ENCODE measurements at regions of chr12 and their contacts with region 1.

Region 1: DNA sequence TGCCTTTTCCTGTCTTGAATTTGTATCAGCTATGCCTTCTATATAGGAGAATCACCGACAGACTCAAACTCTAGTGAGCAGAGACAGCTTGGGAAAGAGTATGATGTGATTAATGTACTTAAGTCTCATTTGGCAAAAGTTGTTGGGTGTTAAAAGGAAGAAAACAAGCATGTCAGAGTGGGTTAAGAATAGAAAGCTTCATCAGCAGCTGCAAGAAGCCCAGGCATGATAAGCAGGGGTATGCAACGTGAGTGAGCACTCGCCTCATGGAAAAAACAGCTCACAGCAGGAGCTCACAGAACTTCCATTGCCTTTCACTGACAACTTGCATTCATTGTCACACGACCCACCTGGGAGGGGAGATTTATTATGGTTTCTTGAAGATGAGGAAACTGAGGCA is 35.9 kb upstream of the WNK1 start:
- DNase-seq: peak in 1 of 3 donors; percentile 49
- ATAC-seq: peak; percentile 60 to 82
- H3K4me3 ChIP-seq: no peak overlapping the region
- H3K27ac ChIP-seq: peak overlapping the region; percentile 62
- H3K4me1 ChIP-seq: peaks cover 3% of the 10 kb centered on the region
- H3K27me3 ChIP-seq: no peaks in the 10 kb centered on the region

Region 2: GRCh38 chr12:585062-586061 is 131.1 kb before region 1 on chr12:
- intact Hi-C with region 1: loop called in 1 of 4 experiments (anchors 5 kb)
- DNase-seq: no peak
- ATAC-seq: no peak
- H3K4me3 ChIP-seq: no peak overlapping the region
- H3K27ac ChIP-seq: no peak overlapping the region
- H3K4me1 ChIP-seq: no peaks in the 10 kb centered on the region
- H3K27me3 ChIP-seq: no peaks in the 10 kb centered on the region

Measured in right cardiac atrium (tissue), 5 donors.